ENCODE measurements at regions of chr7 and their contacts with region 1.

Region 1: DNA sequence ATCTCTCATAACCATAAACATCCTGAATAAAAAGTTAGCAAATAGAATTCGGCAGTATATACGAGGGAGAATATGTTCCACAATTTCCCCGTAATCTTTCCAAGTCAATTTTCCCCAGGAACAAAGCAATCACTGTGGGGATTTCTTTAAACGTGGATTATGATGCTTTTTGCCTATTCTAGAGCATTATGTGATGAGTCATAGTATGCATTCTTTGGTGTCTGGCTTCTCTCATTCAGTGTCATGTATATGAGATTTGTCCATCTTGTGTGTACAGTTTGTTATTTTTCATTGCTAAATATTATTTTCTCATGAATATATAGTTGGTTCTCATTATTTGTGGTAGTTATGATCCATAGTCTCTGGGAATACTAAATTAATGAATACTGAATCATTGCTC is 9.9 kb upstream of the OR9A4 start:
- DNase-seq: no peak
- ATAC-seq: no peak
- H3K4me3 ChIP-seq: no peak overlapping the region
- H3K27ac ChIP-seq: no peak overlapping the region
- H3K4me1 ChIP-seq: no peaks in the 10 kb centered on the region
- H3K27me3 ChIP-seq: no peaks in the 10 kb centered on the region
- CTCF ChIP-seq: no peak
- POLR2A ChIP-seq: no peak
- RAD21 ChIP-seq: no peak

Region 2: GRCh38 chr7:141993354-141993753 is 87.1 kb after region 1 on chr7:
- CTCF ChIA-PET with region 1: no interaction called
- POLR2A ChIA-PET with region 1: no interaction called
- dilution Hi-C with region 1: no loop called
- in situ Hi-C with region 1: no loop called
- intact Hi-C with region 1: no loop called
- DNase-seq: no peak
- ATAC-seq: no peak
- H3K4me3 ChIP-seq: no peak overlapping the region
- H3K27ac ChIP-seq: no peak overlapping the region
- H3K4me1 ChIP-seq: no peaks in the 10 kb centered on the region
- H3K27me3 ChIP-seq: no peaks in the 10 kb centered on the region
- CTCF ChIP-seq: no peak
- POLR2A ChIP-seq: no peak
- RAD21 ChIP-seq: no peak

Region 3: GRCh38 chr7:142006577-142006976 is 100.3 kb after region 1 on chr7:
- CTCF ChIA-PET with region 1: no interaction called
- POLR2A ChIA-PET with region 1: no interaction called
- dilution Hi-C with region 1: no loop called
- in situ Hi-C with region 1: no loop called
- intact Hi-C with region 1: loop called (anchors 2 kb)
- DNase-seq: no peak
- ATAC-seq: no peak
- H3K4me3 ChIP-seq: no peak overlapping the region
- H3K27ac ChIP-seq: no peak overlapping the region
- H3K4me1 ChIP-seq: no peaks in the 10 kb centered on the region
- H3K27me3 ChIP-seq: no peaks in the 10 kb centered on the region
- CTCF ChIP-seq: no peak
- POLR2A ChIP-seq: no peak
- RAD21 ChIP-seq: no peak

Measured in IMR-90 (cell line).